Heart right ventricle (tissue), 16 donors: ENCODE measurements at regions of chr4 and their contacts with region 1.

Region 1: GRCh38 chr4:182938205-182938645 is 21.0 kb upstream of the DCTD start:
- DNase-seq: peak; percentile 71 to 77
- ATAC-seq: peak; percentile 92 to 98 (median 96)
- H3K4me3 ChIP-seq: no peak overlapping the region
- H3K27ac ChIP-seq: no peak overlapping the region
- H3K4me1 ChIP-seq: peaks cover 0 to 6% (median 0%) of the 10 kb centered on the region in 9 donors
- H3K27me3 ChIP-seq: peaks cover 0 to 5% (median 3%) of the 10 kb centered on the region in 7 donors
- CTCF ChIP-seq: peak; percentile 79 to 97 (median 94)

Region 2: DNA sequence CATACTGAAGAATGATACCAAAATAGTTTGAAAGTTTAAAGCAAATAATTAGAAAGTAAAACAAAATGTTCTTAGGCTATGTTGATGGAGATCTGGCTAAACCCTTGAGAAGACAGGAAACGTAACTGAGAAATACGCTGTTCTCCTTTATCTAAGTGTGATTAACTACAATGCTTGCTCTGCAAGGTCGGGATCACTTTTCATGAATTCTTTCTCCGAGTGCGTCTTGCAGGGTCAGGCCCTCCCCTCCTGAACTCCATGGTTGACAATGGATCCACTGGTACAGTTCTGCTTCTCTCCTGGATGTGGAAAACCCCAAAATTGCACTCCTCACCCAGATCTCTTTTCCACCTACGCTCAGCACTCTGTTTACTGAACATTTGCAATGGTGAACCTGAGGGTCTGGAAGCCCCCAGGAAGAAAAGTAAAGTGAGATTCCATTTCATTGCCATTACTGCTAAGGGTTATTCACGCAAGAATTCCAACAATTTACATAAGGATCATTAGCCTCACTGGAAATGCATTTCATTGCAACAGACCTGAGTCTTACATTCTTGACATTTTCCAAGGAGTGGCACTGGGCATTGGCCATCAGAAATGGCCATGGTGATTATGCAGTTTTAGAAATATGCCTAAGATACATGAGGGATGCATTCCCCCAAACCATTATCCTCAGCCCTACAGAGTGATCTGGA is 136.2 kb after region 1 on chr4:
- intact Hi-C with region 1: loop called in 9 of 10 experiments (anchors 2 to 5 kb)
- DNase-seq: no peak
- ATAC-seq: no peak
- H3K4me3 ChIP-seq: no peak overlapping the region
- H3K27ac ChIP-seq: no peak overlapping the region
- H3K4me1 ChIP-seq: no peaks in the 10 kb centered on the region
- H3K27me3 ChIP-seq: no peaks in the 10 kb centered on the region
- CTCF ChIP-seq: no peak

Region 3: GRCh38 chr4:183256756-183257385 is 318.6 kb after region 1 on chr4:
- intact Hi-C with region 1: loop called in 8 of 10 experiments (anchors 1 to 5 kb)
- DNase-seq: peak; percentile 35 to 59
- ATAC-seq: peak; percentile 77 to 90 (median 86)
- H3K4me3 ChIP-seq: no peak overlapping the region
- H3K27ac ChIP-seq: no peak overlapping the region
- H3K4me1 ChIP-seq: peaks cover 0 to 10% (median 3%) of the 10 kb centered on the region in 9 donors
- H3K27me3 ChIP-seq: no peaks in the 10 kb centered on the region
- CTCF ChIP-seq: peak; percentile 63 to 82 (median 79)

Region 4: DNA sequence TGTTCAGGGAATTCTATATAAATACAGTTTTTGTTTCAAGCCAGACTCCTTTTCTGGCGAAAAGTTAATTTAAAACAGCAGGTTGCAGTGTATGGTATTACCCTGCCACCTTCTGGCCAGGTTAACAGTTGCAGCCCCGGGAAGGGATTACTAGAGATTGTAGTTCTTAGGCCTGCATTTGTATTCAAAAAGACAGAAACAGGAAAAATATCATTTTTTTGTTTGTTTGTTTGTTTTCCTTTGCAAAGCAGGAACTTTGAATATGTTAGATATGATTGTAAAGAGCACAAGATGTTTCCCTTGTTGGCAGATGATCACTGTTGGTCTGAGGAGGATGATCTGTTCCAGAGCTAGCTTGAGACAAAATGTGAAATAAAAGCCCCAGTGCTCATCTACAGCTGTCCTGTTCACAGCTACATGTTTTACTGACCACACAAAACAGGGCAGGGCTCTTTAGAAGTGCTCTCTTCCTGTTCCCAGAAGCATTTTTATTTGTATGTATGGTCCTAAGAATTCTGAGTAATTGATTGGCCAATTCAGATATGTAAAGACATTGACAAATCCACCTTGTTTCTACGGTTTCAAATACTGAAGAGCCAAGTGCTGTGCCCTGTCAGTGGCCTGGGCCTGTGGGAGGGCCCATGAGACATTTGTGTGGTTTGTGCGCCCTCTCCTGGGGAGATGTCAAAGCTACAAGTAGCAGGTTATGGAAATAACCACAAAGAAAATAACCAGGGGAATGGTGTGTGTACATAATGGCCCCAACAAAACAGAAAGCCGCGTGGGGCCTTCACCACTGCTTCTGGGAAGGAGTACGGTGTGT is 323.9 kb after region 1 on chr4:
- intact Hi-C with region 1: loop called (anchors 1 to 5 kb)
- DNase-seq: peak; percentile 69 to 79
- ATAC-seq: peak; percentile 85 to 98 (median 93)
- H3K4me3 ChIP-seq: no peak overlapping the region
- H3K27ac ChIP-seq: peak overlapping the region in 5 of 10 donors; percentile 11 to 57 (median 43)
- H3K4me1 ChIP-seq: peaks cover 0 to 9% (median 8%) of the 10 kb centered on the region in 9 donors
- H3K27me3 ChIP-seq: no peaks in the 10 kb centered on the region
- CTCF ChIP-seq: peak; percentile 63 to 85 (median 71)

Region 5: DNA sequence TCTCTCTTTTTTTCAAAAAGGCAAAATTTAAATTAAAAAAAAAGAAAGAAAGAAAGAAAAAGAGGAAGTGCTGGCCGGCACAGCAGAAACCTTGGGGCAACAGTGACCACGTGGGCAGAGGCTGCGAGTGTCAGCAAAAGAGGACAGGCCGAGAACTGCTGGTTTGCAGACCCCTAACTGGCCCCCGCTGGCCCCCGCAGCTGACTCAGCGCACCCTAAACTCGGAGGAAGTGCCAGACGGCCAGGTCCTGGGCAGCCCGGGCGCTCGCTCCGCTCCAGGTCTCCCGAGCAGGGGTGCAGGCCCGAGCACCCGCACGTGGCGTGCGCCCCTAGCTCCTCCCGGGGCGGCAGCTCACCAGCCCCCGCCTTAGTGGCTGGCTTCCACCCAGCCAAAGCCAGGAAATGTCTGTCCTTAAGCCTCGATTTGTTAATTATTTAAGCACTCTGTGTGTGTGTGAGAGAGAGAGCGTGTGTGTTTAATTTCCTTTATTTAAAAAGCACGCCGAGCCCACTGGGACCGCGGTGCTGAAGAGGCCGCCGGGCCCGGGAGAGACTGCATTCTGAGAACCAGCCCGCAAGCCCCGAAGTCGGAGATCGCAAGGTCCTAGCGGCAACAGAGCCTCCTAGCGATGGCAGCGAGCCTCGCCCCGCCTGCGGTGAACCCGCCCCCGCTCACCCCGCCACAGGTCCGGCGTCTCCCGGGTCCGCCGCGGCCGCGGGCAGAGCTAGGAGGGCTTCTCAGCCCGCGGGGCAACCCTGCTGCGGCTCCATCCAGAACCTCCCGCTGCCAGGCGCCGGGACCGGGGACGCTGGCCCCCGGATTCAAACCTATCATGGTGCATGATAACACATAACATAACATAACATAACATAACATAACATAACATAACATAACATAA is 460.3 kb after region 1 on chr4:
- intact Hi-C with region 1: loop called in 3 of 10 experiments (anchors 5 to 10 kb)
- DNase-seq: peak; percentile 56 to 74
- ATAC-seq: peak; percentile 81 to 94 (median 88)
- H3K4me3 ChIP-seq: peak overlapping the region; percentile 28 to 64 (median 62)
- H3K27ac ChIP-seq: peak overlapping the region in 6 of 10 donors; percentile 15 to 86 (median 38)
- H3K4me1 ChIP-seq: peaks cover 0 to 41% (median 8%) of the 10 kb centered on the region in 9 donors
- H3K27me3 ChIP-seq: no peaks in the 10 kb centered on the region
- CTCF ChIP-seq: peak; percentile 21 to 76 (median 55)

Region 6: GRCh38 chr4:183407128-183407585 is 468.9 kb after region 1 on chr4:
- intact Hi-C with region 1: loop called in 3 of 10 experiments (anchors 5 to 10 kb)
- DNase-seq: peak; percentile 79 to 90
- ATAC-seq: peak; percentile 89 to 95 (median 92)
- H3K4me3 ChIP-seq: peak overlapping the region in 9 of 10 donors; percentile 28 to 55 (median 45)
- H3K27ac ChIP-seq: peak overlapping the region in 7 of 10 donors; percentile 7 to 76 (median 32)
- H3K4me1 ChIP-seq: peaks cover 0 to 11% (median 0%) of the 10 kb centered on the region in 9 donors
- H3K27me3 ChIP-seq: no peaks in the 10 kb centered on the region
- CTCF ChIP-seq: peak; percentile 92 to 99 (median 96)